ENCODE measurements at regions of chr12 and their contacts with region 1.

Region 1: DNA sequence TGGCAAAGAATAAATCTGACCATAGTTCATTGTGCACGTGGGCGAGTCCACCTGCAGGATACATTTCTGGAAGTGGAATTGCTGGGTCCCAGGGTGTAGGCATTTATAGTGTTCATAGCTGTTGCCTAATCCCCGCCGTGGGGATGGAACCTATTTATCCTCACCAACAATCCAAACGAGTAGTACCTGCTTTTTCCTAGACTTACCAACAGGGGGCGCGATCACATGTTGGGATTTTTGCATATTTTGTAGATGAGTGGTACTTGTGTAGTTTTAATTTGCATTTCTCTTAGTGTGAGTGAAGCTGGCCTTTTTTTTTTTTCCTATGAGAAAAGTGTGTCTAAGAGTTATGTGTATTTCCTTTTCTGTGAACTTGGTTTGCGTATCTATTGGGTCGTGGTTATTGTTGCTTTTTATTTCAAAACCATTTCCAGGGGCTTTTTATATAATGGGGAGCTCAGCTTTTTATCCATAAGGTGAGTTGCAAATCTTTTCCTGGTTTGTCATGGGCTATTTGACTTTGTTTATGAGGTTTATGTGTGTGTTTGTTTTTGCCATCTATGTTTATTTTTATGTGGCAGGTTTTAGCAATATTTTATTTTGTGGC is 67.2 kb downstream of the CCDC92 start:
- DNase-seq: peak; percentile 90
- H3K4me3 Mint-ChIP-seq: no peak overlapping the region
- H3K27ac Mint-ChIP-seq: no peak overlapping the region
- H3K4me1 Mint-ChIP-seq: peaks cover 7% of the 10 kb centered on the region
- H3K27me3 Mint-ChIP-seq: peaks cover 5% of the 10 kb centered on the region

Region 2: GRCh38 chr12:123983822-123984485 is 78.5 kb after region 1 on chr12:
- intact Hi-C with region 1: loop called (anchors 1 kb)
- DNase-seq: peak; percentile 85
- H3K4me3 Mint-ChIP-seq: no peak overlapping the region
- H3K27ac Mint-ChIP-seq: no peak overlapping the region
- H3K4me1 Mint-ChIP-seq: peaks cover 18% of the 10 kb centered on the region
- H3K27me3 Mint-ChIP-seq: no peaks in the 10 kb centered on the region

Region 3: GRCh38 chr12:124030510-124030909 is 125.1 kb after region 1 on chr12:
- intact Hi-C with region 1: loop called (anchors 2 kb)
- DNase-seq: no peak
- H3K4me3 Mint-ChIP-seq: no peak overlapping the region
- H3K27ac Mint-ChIP-seq: no peak overlapping the region
- H3K4me1 Mint-ChIP-seq: no peaks in the 10 kb centered on the region
- H3K27me3 Mint-ChIP-seq: peaks cover 6% of the 10 kb centered on the region

Measured in activated CD4-positive, alpha-beta T cell treated with anti-CD3 and anti-CD28 coated beads, Interleukin-2, amount 10 ng/mL, durations not matched to agents 24 days and 14 days (primary cell).